Activated naive CD4-positive, alpha-beta T cell treated with anti-CD3 and anti-CD28 coated beads for 36 hours (primary cell): ENCODE measurements at regions of chr1 and their contacts with region 1.

Region 1: DNA sequence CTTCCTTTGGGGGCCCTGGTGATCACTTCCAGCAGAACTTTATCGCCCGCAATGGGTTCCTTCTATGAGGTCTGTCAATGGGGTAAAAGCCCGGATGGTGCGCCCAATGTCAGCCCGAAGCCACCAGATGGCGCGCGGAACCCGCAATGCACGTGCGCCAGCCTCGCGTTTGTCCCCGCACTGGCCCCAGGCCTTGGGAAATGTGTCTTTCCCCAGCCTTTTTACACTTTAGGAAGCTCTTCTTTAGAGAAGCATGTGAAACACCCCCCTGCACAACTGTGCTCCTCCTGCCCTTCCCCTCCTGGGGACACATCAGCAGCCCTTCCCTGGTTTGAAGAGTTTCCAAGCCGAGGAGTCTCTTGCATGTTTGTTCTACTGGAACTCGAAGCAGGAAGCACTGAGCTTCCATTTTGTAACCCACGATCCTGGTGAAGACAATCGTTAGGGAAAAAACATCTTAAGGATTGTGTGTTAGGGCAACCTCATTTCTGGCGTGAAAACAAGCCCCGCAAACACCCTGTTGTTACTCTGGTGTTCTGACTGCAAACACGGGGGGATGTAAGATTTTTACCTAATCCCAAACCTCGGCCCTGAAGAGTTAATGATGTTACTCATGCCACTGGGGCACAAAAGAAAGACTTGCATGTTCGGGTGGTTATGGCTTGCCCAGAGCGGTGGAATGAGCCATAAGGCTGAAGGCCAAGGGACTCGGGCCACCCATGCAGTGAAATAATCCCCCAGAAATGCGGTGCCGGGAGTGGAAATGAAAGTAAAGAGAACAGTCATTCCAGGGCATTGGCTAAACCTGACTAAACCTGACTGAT is 20.4 kb upstream of the TARBP1 start:
- DNase-seq: peak; percentile 92
- H3K4me3 Mint-ChIP-seq: no peak overlapping the region
- H3K27ac Mint-ChIP-seq: peak overlapping the region; percentile 82
- H3K4me1 Mint-ChIP-seq: peaks cover 64% of the 10 kb centered on the region
- H3K27me3 Mint-ChIP-seq: no peaks in the 10 kb centered on the region

Region 2: GRCh38 chr1:233703807-233704541 is 795.4 kb before region 1 on chr1:
- CTCF ChIA-PET with region 1: no interaction called
- intact Hi-C with region 1: no loop called
- DNase-seq: no peak
- H3K4me3 Mint-ChIP-seq: no peak overlapping the region
- H3K27ac Mint-ChIP-seq: no peak overlapping the region
- H3K4me1 Mint-ChIP-seq: no peaks in the 10 kb centered on the region
- H3K27me3 Mint-ChIP-seq: peaks cover 11% of the 10 kb centered on the region

Region 3: GRCh38 chr1:234433563-234434285 is 65.6 kb before region 1 on chr1:
- CTCF ChIA-PET with region 1: no interaction called
- intact Hi-C with region 1: no loop called
- DNase-seq: no peak
- H3K4me3 Mint-ChIP-seq: no peak overlapping the region
- H3K27ac Mint-ChIP-seq: no peak overlapping the region
- H3K4me1 Mint-ChIP-seq: peaks cover 7% of the 10 kb centered on the region
- H3K27me3 Mint-ChIP-seq: no peaks in the 10 kb centered on the region

Region 4: DNA sequence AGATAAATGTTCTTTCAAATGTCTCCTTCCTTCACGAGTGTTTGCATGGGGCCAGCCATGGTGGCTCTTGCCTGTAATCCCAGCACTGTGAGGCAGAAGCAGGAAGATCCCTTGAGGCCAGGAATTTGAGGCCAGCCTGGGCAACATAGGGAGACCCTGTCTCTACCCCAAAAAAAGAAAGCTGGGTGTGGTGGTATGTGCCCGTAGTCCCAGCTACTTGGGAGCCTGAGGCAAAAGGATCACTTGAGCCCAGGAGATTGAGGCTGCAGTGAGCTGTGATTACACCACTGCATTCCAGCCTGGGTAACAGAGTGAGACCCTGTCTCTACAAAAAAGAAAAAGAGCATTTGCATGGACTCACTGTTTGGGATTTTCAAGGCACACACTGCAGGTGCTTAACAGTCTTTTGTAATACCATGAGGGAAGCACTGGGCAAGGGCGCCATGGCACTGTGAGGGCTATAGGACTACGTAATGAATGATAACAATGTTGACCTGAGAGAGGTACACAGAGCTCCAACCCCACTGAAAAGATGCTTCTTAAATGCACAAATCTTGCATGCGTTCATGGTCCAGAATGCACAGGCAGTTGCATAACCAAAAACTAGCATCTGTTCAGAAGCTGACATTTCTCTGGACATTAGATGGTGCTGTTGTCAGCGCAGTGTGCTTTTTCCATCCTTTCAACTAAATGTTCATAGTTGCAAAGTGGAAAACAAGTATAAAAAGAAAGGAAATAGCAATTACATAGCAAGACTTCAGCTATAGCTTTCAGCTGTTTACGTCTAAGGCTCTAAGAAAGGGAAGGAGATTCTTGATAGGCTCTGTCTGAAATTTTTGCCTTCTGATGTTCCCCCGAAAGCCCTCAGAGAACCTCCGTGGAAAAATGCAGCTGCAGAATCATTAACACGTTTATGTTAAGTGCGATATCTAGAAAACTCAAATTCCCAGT is 12.6 kb before region 1 on chr1:
- CTCF ChIA-PET with region 1: interaction called, 20 read pairs
- intact Hi-C with region 1: loop called (anchors 1 kb)
- DNase-seq: peak; percentile 66
- H3K4me3 Mint-ChIP-seq: no peak overlapping the region
- H3K27ac Mint-ChIP-seq: peak overlapping the region; percentile 91
- H3K4me1 Mint-ChIP-seq: peaks cover 41% of the 10 kb centered on the region
- H3K27me3 Mint-ChIP-seq: peaks cover 12% of the 10 kb centered on the region

Region 5: DNA sequence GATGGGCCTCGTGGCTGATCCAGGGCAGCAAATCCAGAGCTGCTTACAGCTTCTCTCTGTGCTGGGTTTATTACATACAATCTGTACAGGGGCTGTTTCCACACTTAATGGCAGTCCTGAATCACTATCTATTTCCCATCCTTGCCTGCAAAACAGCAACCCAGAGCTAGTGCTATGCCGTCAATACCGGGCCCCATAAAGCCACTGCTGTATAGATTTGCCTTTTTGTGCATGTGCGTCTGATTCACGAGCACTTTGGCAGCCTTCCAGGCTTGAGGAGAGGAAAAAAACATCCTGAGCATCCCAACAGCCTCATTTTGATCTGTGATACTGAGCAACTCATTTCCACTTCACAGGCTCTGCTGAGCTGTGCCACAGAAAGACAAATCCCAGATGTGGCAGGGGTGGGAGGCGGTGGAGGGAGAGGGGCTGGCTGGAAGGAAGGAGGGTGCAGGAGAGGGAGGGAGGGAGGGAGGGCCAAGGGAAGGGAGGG is 44.8 kb after region 1 on chr1:
- CTCF ChIA-PET with region 1: no interaction called
- intact Hi-C with region 1: loop called (anchors 1 kb)
- DNase-seq: peak; percentile 89
- H3K4me3 Mint-ChIP-seq: no peak overlapping the region
- H3K27ac Mint-ChIP-seq: peak overlapping the region; percentile 69
- H3K4me1 Mint-ChIP-seq: peaks cover 19% of the 10 kb centered on the region
- H3K27me3 Mint-ChIP-seq: no peaks in the 10 kb centered on the region

Region 6: GRCh38 chr1:234647245-234647644 is 147.9 kb after region 1 on chr1:
- CTCF ChIA-PET with region 1: no interaction called
- intact Hi-C with region 1: no loop called
- DNase-seq: no peak
- H3K4me3 Mint-ChIP-seq: no peak overlapping the region
- H3K27ac Mint-ChIP-seq: no peak overlapping the region
- H3K4me1 Mint-ChIP-seq: no peaks in the 10 kb centered on the region
- H3K27me3 Mint-ChIP-seq: no peaks in the 10 kb centered on the region

Region 7: DNA sequence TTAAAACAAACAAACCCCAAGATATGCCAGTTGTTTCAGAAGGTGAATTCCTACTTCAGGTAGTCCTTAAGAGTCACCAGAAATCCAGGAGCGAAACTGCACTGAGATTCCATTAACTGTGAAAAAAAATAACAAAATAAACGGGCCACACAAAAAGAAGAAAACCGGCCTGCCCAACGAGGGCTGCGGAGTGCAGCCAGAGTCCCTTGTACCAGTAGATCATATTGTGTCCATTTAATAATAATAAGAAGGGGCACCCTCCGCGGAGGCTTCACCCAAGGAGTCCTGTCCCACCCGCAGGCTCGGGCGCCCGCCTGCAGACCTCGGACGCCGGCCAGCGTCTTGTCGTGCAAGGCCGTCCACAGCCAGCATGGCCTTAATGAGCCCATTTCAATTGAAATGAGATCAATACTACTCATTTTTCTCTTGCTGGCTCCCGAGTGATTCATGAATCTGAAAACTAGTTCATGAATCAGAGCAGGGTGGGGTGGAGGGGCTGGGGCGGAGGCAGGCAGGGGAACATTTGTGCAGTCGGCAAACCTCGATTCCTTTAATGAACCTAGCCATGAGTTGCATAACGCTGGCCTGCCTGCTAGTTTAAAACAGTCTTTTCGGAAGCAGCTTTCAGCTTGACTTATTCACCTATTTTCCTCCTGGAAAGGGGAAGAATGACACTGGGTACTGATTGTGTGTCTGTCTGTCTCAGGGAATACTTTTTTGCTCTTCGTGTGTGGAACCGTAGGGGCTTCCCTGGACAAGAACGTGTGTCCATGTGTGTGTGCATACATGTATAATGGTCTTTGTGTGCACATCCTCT is 223.8 kb after region 1 on chr1:
- CTCF ChIA-PET with region 1: interaction called, 3 read pairs
- intact Hi-C with region 1: loop called (anchors 1 kb)
- DNase-seq: peak; percentile 91
- H3K4me3 Mint-ChIP-seq: peak overlapping the region; percentile 70
- H3K27ac Mint-ChIP-seq: peak overlapping the region; percentile 97
- H3K4me1 Mint-ChIP-seq: peaks cover 61% of the 10 kb centered on the region
- H3K27me3 Mint-ChIP-seq: no peaks in the 10 kb centered on the region

Region 8: GRCh38 chr1:234772345-234773147 is 273.2 kb after region 1 on chr1:
- CTCF ChIA-PET with region 1: interaction called, 3 read pairs
- intact Hi-C with region 1: loop called (anchors 1 kb)
- DNase-seq: peak; percentile 97
- H3K4me3 Mint-ChIP-seq: peak overlapping the region; percentile 61
- H3K27ac Mint-ChIP-seq: peak overlapping the region; percentile 92
- H3K4me1 Mint-ChIP-seq: peaks cover 59% of the 10 kb centered on the region
- H3K27me3 Mint-ChIP-seq: no peaks in the 10 kb centered on the region

Region 9: GRCh38 chr1:234970731-234971476 is 471.6 kb after region 1 on chr1:
- CTCF ChIA-PET with region 1: interaction called, 4 read pairs
- intact Hi-C with region 1: loop called (anchors 2 kb)
- DNase-seq: peak; percentile 60
- H3K4me3 Mint-ChIP-seq: no peak overlapping the region
- H3K27ac Mint-ChIP-seq: peak overlapping the region; percentile 88
- H3K4me1 Mint-ChIP-seq: peaks cover 64% of the 10 kb centered on the region
- H3K27me3 Mint-ChIP-seq: no peaks in the 10 kb centered on the region